Gastrocnemius medialis (tissue), 4 donors: ENCODE measurements at regions of chr7 and their contacts with region 1.

Region 1: DNA sequence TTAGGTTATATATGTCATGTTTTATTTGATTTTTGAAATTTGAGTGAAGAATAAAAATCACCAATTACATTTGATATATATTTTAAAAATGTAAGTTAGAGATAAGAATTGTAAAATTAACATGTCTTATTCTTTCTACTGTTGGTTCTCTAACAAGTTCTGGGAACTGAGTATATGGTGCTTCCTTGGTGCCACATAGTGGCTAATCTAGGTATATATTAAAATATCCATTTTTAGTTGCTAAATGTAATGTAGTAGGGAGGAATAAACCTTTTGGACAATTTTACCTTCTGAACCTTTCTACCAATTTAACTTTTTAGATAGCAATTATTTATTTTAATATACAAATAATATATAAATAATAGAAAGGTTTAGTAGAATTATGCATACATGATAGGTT is 17.5 kb downstream of the CFAP69 start:
- DNase-seq: no peak
- ATAC-seq: no peak
- H3K4me3 ChIP-seq: no peak overlapping the region
- H3K27ac ChIP-seq: no peak overlapping the region
- H3K4me1 ChIP-seq: no peaks in the 10 kb centered on the region
- H3K27me3 ChIP-seq: no peaks in the 10 kb centered on the region
- CTCF ChIP-seq: peak in 3 of 5 experiments; percentile 11 to 25 (median 23)
- POLR2A ChIP-seq: no peak

Region 2: GRCh38 chr7:90155206-90155605 is 107.2 kb before region 1 on chr7:
- in situ Hi-C with region 1: loop called in 1 of 4 experiments (anchors 25 kb)
- intact Hi-C with region 1: loop called (anchors 5 kb)
- DNase-seq: no peak
- ATAC-seq: no peak
- H3K4me3 ChIP-seq: no peak overlapping the region
- H3K27ac ChIP-seq: no peak overlapping the region
- H3K4me1 ChIP-seq: peaks cover 0 to 10% of the 10 kb centered on the region in 2 donors
- H3K27me3 ChIP-seq: no peaks in the 10 kb centered on the region
- CTCF ChIP-seq: no peak
- POLR2A ChIP-seq: no peak

Region 3: DNA sequence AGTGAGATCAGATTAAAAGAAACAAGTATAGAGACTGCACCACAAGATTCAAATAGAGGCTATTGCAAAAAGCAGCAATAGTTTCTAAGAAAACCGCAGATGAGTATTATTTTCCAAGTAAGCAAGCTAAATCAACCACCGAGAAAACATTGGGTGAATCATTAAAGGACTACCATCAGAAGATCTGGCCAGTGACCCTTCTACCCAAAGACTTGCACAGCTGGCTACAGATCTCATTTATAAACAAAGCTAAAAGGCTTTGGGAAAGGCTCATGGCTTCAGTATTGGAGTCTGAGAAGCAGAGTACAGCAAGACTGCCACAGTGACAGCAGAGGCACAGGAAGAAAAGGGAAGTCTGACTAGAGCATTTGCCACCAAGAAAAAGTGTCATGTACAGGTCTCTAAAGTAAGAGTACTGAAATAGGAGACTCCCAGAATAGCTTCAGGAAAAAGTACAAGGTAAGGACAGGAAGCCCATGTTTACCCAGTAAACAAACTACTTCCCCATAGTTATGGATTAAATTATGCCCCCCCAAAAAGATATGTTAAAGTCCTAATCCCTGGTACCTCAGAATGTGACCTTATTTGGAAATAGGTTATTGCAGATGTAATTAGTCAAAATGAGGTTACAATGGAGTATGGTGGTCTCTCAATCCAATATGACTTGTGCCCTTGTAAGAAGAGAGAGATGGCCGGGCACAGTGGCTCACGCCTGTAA is 89.2 kb before region 1 on chr7:
- in situ Hi-C with region 1: loop called in 1 of 4 experiments (anchors 25 kb)
- intact Hi-C with region 1: no loop called
- DNase-seq: no peak
- ATAC-seq: no peak
- H3K4me3 ChIP-seq: no peak overlapping the region
- H3K27ac ChIP-seq: no peak overlapping the region
- H3K4me1 ChIP-seq: no peaks in the 10 kb centered on the region
- H3K27me3 ChIP-seq: no peaks in the 10 kb centered on the region
- CTCF ChIP-seq: no peak
- POLR2A ChIP-seq: no peak

Region 4: DNA sequence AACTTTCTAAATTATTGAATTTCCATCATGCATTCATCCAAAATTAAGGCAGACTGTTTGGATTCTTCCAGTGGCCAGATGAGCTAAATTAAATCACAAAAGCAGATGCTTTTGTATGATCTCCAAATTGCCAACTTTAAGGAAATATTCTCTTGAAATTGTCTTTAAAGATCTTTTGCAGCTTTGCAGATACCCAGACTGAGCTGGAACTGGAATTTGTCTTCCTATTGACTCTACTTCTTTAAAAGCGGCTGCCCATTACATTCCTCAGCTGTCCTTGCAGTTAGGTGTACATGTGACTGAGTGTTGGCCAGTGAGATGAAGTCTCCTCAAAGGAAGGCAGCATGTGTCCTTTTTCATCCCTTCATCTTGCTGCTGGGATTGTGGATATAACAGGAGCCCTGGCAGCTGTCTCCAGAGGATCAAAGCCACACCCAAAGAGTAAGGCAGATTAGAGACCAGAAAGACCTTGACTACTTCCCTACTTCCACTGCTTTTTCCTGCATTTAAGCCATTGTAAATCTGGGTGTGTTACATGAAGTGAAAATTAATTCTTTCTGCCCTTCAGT is 25.6 kb before region 1 on chr7:
- in situ Hi-C with region 1: no loop called
- intact Hi-C with region 1: no loop called
- DNase-seq: no peak
- ATAC-seq: no peak
- H3K4me3 ChIP-seq: no peak overlapping the region
- H3K27ac ChIP-seq: no peak overlapping the region
- H3K4me1 ChIP-seq: no peaks in the 10 kb centered on the region
- H3K27me3 ChIP-seq: no peaks in the 10 kb centered on the region
- CTCF ChIP-seq: no peak
- POLR2A ChIP-seq: no peak